GM12878 (cell line): ENCODE measurements at regions of chr1 and their contacts with region 1.

Region 1: DNA sequence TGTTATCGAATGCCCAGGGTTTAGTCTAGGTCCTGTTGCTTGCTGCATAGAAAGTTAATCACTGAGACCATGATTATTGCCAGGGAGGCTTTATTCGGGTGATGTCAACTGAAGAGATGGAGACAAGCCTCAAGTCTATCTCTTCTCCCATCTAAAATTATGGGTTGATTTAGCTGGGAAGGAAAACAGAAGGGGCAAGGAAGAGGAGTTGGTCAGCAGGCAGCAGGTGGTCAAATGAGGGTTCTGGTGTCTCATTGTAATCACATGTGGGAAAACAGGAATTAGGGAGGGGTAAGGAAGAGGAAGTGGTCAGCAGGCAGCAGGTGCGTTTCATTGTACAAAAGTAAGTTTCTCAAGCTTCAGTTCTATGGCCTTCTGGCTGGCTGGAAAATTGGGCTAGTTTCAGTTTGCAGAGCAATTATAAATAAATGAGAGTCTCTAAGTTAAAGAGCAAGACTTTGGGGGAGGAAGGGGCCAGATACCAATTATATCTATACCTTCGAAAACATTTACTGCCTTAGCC is 146.3 kb upstream of the DNAH14 start:
- DNase-seq: peak; percentile 72
- ATAC-seq: peak; percentile 71
- H3K4me3 ChIP-seq: no peak overlapping the region
- H3K27ac ChIP-seq: peak overlapping the region; percentile 55
- H3K4me1 ChIP-seq: peaks cover 25% of the 10 kb centered on the region
- H3K27me3 ChIP-seq: no peaks in the 10 kb centered on the region
- CTCF ChIP-seq: no peak
- EP300 ChIP-seq: peak; percentile 47 to 60; a peak in 2 of 4 replicates
- POLR2A ChIP-seq: no peak
- RAD21 ChIP-seq: no peak

Region 2: DNA sequence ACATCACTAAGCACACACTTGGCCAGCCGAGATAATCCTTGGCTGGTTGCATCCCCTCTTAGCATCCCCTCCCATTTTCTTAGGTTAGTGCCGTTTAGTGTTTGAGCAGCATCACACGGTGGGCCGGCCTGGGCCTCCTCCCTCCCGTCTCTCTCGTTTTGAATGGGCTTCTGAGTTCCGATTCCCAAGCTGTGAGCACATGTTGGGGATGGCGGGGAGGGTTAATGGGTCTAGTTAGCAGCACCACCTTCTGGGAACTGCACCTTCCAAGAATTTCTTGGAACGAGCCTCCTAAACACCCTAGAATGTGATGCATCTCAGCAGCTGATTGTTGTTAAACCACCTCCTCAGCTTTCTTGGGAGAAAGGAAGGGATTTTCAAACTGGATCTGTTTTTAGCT is 93.8 kb before region 1 on chr1:
- CTCF ChIA-PET with region 1: no interaction called
- POLR2A ChIA-PET with region 1: no interaction called
- RAD21 ChIA-PET with region 1: no interaction called
- SMC1A ChIA-PET with region 1: no interaction called
- in situ Hi-C with region 1: no loop called
- intact Hi-C with region 1: no loop called
- DNase-seq: no peak
- ATAC-seq: no peak
- H3K4me3 ChIP-seq: no peak overlapping the region
- H3K27ac ChIP-seq: no peak overlapping the region
- H3K4me1 ChIP-seq: no peaks in the 10 kb centered on the region
- H3K27me3 ChIP-seq: no peaks in the 10 kb centered on the region; a peak in 1 of 4 replicates
- CTCF ChIP-seq: no peak
- EP300 ChIP-seq: no peak
- POLR2A ChIP-seq: no peak
- RAD21 ChIP-seq: no peak

Region 3: GRCh38 chr1:224720226-224720625 is 63.0 kb before region 1 on chr1:
- CTCF ChIA-PET with region 1: no interaction called
- POLR2A ChIA-PET with region 1: no interaction called
- RAD21 ChIA-PET with region 1: no interaction called
- SMC1A ChIA-PET with region 1: no interaction called
- in situ Hi-C with region 1: no loop called
- intact Hi-C with region 1: no loop called
- DNase-seq: no peak
- ATAC-seq: no peak
- H3K4me3 ChIP-seq: no peak overlapping the region
- H3K27ac ChIP-seq: no peak overlapping the region
- H3K4me1 ChIP-seq: no peaks in the 10 kb centered on the region
- H3K27me3 ChIP-seq: no peaks in the 10 kb centered on the region
- CTCF ChIP-seq: no peak
- EP300 ChIP-seq: no peak
- POLR2A ChIP-seq: no peak
- RAD21 ChIP-seq: no peak

Region 4: DNA sequence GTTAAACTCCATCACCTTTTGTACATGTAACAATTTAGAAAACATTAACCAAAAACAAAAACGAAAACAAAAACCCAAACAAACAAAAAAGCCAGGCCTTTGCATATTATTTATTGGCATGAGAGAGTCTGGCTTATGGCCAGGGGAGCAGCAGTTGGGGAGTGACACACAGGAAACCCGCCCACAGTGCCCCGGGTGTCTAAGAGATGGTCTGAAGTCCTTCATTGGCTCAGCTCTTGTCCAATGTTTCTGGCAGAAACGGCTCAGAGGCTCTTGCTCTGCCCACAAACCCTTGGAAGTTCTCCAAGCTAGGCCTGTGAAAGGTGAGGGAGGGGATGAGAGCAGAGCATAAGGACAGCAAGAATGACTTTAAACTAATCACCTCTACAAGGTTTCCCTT is 35.6 kb before region 1 on chr1:
- CTCF ChIA-PET with region 1: interaction called, 4 read pairs
- POLR2A ChIA-PET with region 1: interaction called, 5 read pairs
- RAD21 ChIA-PET with region 1: interaction called, 6 read pairs
- SMC1A ChIA-PET with region 1: interaction called, 125 read pairs
- in situ Hi-C with region 1: no loop called
- intact Hi-C with region 1: loop called (anchors 5 kb)
- DNase-seq: no peak
- ATAC-seq: peak; percentile 45
- H3K4me3 ChIP-seq: no peak overlapping the region
- H3K27ac ChIP-seq: no peak overlapping the region
- H3K4me1 ChIP-seq: peaks cover 53% of the 10 kb centered on the region
- H3K27me3 ChIP-seq: no peaks in the 10 kb centered on the region
- CTCF ChIP-seq: no peak
- EP300 ChIP-seq: no peak
- POLR2A ChIP-seq: no peak
- RAD21 ChIP-seq: no peak

Region 5: DNA sequence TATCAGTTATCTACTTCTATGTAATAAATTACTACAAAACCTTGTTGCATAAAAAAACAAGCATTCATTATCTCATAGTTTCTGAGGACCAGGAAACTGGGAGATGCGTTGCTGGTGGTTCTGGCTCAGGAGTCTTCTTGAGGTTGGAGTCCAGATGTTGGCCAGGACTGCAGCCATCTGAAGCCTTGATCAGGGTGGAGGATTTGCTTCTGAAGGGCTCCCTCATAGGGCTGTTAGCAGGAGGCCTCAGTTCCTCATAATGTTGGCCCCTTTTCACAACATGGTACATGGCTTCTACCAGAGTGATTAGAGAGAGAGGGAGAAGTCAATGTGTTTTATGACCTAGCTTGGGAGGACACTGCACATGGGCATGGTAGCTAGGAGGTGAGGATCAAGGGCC is 29.7 kb before region 1 on chr1:
- CTCF ChIA-PET with region 1: interaction called, 3 read pairs
- POLR2A ChIA-PET with region 1: interaction called, 3 read pairs
- RAD21 ChIA-PET with region 1: interaction called, 5 read pairs
- SMC1A ChIA-PET with region 1: interaction called, 14 read pairs
- in situ Hi-C with region 1: no loop called
- intact Hi-C with region 1: loop called (anchors 5 kb)
- DNase-seq: no peak
- ATAC-seq: peak; percentile 43
- H3K4me3 ChIP-seq: no peak overlapping the region
- H3K27ac ChIP-seq: no peak overlapping the region
- H3K4me1 ChIP-seq: peaks cover 34% of the 10 kb centered on the region
- H3K27me3 ChIP-seq: no peaks in the 10 kb centered on the region
- CTCF ChIP-seq: no peak
- EP300 ChIP-seq: no peak
- POLR2A ChIP-seq: no peak
- RAD21 ChIP-seq: no peak

Region 6: GRCh38 chr1:224804220-224804619 is 21.0 kb after region 1 on chr1:
- CTCF ChIA-PET with region 1: no interaction called
- POLR2A ChIA-PET with region 1: interaction called, 12 read pairs
- RAD21 ChIA-PET with region 1: no interaction called
- SMC1A ChIA-PET with region 1: interaction called, 7 read pairs
- in situ Hi-C with region 1: no loop called
- intact Hi-C with region 1: no loop called
- DNase-seq: no peak
- ATAC-seq: no peak
- H3K4me3 ChIP-seq: no peak overlapping the region
- H3K27ac ChIP-seq: no peak overlapping the region
- H3K4me1 ChIP-seq: no peaks in the 10 kb centered on the region
- H3K27me3 ChIP-seq: no peaks in the 10 kb centered on the region
- CTCF ChIP-seq: no peak
- EP300 ChIP-seq: no peak
- POLR2A ChIP-seq: no peak
- RAD21 ChIP-seq: no peak